ENCODE measurements at regions of chr11 and their contacts with region 1.

Region 1: DNA sequence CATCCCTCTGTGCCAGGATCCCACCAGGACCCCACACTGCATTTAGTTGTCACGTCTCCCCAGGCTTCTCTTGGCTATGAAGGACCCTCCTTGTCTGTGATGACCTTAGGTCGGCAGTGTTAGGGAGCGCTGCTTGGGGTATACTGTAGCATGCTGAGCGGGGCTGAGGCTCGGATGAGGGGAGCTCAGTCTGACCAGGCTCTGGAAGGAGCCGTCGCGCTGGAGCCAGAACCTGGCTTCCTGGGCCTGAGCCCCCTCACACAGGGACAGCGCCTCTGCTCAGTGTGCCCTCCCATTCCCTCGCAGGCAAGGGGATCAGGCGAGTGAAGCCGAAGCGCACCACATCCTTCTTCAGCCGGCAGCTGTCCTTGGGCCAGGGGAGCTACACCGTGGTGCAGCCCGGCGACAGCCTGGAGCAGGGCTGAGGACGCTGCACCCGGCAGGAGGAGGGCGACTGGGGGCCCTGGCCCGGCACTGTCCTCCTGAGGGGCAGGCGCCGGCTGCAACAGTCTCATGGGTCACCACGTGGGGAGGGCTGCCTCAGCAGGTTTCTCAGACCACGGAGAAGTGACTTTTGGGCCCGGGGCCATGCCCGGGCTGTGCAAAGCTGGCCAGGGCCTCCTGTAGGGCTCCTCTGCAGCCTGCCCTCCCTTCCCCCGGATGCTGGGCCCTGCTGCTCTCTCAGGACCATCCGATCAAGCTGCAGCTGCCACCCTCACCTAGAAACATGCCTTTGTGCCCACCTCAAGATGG is 11.5 kb upstream of the NEAT1 start:
- DNase-seq: no peak
- H3K4me3 ChIP-seq: no peak overlapping the region
- H3K27ac ChIP-seq: no peak overlapping the region
- H3K4me1 ChIP-seq: peaks cover 4 to 8% (median 5%) of the 10 kb centered on the region in 4 donors
- H3K27me3 ChIP-seq: no peaks in the 10 kb centered on the region
- CTCF ChIP-seq: no peak
- EP300 ChIP-seq: no peak
- POLR2A ChIP-seq: no peak

Region 2: DNA sequence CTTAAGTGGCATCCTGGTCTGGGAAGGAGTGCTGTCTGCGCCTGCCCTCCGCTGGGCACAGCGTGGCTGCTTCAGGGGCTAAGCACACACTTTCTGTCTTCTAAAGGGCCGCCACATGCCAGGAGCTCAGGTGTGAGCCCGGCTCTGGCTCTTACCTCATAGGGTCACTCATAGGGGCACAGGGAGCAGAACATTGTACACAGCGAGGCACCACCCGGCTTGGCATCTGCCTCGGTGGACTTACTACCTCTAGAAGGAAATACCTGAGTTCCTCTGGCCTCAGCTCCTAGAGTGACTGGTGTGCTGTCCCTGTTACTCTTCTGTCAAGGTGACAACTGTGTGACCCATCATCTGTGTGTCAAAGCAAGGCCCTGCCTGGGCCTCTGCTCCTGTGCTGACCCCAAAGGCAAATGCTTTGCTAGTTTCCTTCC is 24.9 kb after region 1 on chr11:
- in situ Hi-C with region 1: no loop called
- intact Hi-C with region 1: loop called (anchors 1 kb)
- DNase-seq: peak; percentile 40
- H3K4me3 ChIP-seq: no peak overlapping the region
- H3K27ac ChIP-seq: peak overlapping the region; percentile 13 to 100 (median 73)
- H3K4me1 ChIP-seq: peaks cover 15 to 87% (median 30%) of the 10 kb centered on the region in 4 donors
- H3K27me3 ChIP-seq: no peaks in the 10 kb centered on the region
- CTCF ChIP-seq: no peak
- EP300 ChIP-seq: no peak
- POLR2A ChIP-seq: peak; percentile 47